GM12878 (cell line): ENCODE measurements at regions of chr4 and their contacts with region 1.

Region 1: GRCh38 chr4:142282870-142283431 is 563.1 kb downstream of the INPP4B start:
- DNase-seq: no peak
- ATAC-seq: peak; percentile 47
- H3K4me3 ChIP-seq: no peak overlapping the region
- H3K27ac ChIP-seq: no peak overlapping the region
- H3K4me1 ChIP-seq: no peaks in the 10 kb centered on the region
- H3K27me3 ChIP-seq: no peaks in the 10 kb centered on the region
- CTCF ChIP-seq: peak; percentile 48 to 53 (median 49); a peak in 5 of 6 replicates
- EP300 ChIP-seq: no peak
- POLR2A ChIP-seq: no peak
- RAD21 ChIP-seq: peak; percentile 35

Region 2: DNA sequence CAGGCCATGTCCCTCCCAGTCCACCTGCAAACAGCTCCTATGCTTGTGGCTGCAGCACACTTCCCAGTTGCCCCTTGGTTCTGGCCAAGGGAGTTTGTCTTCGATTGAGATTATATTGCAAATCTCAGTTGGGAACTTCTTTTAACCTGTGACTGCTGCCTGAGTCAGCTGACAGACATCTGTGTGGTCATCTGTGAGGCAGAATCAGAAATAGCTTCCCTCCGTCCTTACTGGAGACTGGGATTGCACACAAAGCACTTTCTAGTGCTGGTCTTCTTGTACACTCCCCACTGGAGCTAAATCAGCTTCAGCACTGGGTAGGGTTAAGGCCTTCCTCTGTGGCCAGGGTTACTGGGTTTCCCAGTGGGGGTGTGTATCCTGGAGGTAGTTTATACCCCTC is 1027.9 kb before region 1 on chr4:
- CTCF ChIA-PET with region 1: no interaction called
- POLR2A ChIA-PET with region 1: no interaction called
- RAD21 ChIA-PET with region 1: no interaction called
- SMC1A ChIA-PET with region 1: no interaction called
- in situ Hi-C with region 1: no loop called
- intact Hi-C with region 1: no loop called
- DNase-seq: no peak
- ATAC-seq: no peak
- H3K4me3 ChIP-seq: no peak overlapping the region
- H3K27ac ChIP-seq: no peak overlapping the region
- H3K4me1 ChIP-seq: no peaks in the 10 kb centered on the region
- H3K27me3 ChIP-seq: no peaks in the 10 kb centered on the region; a peak in 1 of 4 replicates
- CTCF ChIP-seq: no peak
- EP300 ChIP-seq: no peak
- POLR2A ChIP-seq: no peak
- RAD21 ChIP-seq: no peak

Region 3: DNA sequence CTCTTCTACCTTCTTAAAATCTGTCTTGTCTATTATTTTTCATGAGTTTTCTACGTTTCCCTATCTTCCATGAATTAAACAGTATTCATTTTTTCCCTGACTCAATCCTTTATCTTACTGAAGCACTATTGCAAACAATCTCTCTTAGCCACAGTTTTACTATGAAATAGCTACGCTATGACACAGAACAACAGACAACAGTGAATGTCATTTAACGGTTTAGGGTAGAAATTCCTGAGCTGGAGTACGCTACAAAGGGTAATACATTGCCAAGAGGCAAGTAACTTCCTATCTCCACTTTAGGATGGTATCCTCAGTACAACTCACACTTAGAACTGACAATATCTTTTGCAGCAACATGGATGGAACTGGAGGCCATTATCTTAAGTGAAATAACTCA is 10.6 kb after region 1 on chr4:
- CTCF ChIA-PET with region 1: interaction called, 18 read pairs
- POLR2A ChIA-PET with region 1: no interaction called
- RAD21 ChIA-PET with region 1: interaction called, 5 read pairs
- SMC1A ChIA-PET with region 1: interaction called, 41 read pairs
- in situ Hi-C with region 1: no loop called
- intact Hi-C with region 1: no loop called
- DNase-seq: no peak
- ATAC-seq: no peak
- H3K4me3 ChIP-seq: no peak overlapping the region
- H3K27ac ChIP-seq: no peak overlapping the region
- H3K4me1 ChIP-seq: no peaks in the 10 kb centered on the region
- H3K27me3 ChIP-seq: no peaks in the 10 kb centered on the region
- CTCF ChIP-seq: no peak
- EP300 ChIP-seq: no peak
- POLR2A ChIP-seq: no peak
- RAD21 ChIP-seq: no peak

Region 4: GRCh38 chr4:142347241-142347640 is 64.3 kb after region 1 on chr4:
- CTCF ChIA-PET with region 1: interaction called, 60 read pairs
- POLR2A ChIA-PET with region 1: interaction called, 3 read pairs
- RAD21 ChIA-PET with region 1: interaction called, 18 read pairs
- SMC1A ChIA-PET with region 1: interaction called, 26 read pairs
- in situ Hi-C with region 1: no loop called
- intact Hi-C with region 1: no loop called
- DNase-seq: no peak
- ATAC-seq: no peak
- H3K4me3 ChIP-seq: no peak overlapping the region
- H3K27ac ChIP-seq: no peak overlapping the region
- H3K4me1 ChIP-seq: no peaks in the 10 kb centered on the region
- H3K27me3 ChIP-seq: no peaks in the 10 kb centered on the region
- CTCF ChIP-seq: no peak
- EP300 ChIP-seq: no peak
- POLR2A ChIP-seq: no peak
- RAD21 ChIP-seq: no peak

Region 5: DNA sequence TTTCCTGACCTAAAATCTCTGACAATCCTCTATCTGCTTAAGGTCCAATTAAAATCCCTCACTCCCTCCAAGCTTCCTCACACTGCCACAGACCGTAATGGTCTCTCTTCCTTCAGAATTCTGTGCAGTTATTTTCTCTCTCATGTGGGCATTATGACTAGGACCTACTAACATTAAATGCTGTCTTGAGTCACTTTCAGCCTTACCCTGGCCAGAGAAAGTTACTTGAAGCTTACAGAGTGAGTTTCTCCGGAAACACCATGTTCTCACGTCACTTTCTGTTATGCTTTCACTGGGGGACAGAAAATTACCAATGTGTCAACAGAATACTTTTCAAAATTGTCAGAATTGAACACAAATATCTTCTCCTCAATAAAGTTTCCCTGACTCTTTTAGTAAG is 291.4 kb after region 1 on chr4:
- CTCF ChIA-PET with region 1: interaction called, 10 read pairs
- POLR2A ChIA-PET with region 1: no interaction called
- RAD21 ChIA-PET with region 1: interaction called, 31 read pairs
- SMC1A ChIA-PET with region 1: interaction called, 5 read pairs
- in situ Hi-C with region 1: no loop called
- intact Hi-C with region 1: no loop called
- DNase-seq: no peak
- ATAC-seq: peak; percentile 80
- H3K4me3 ChIP-seq: no peak overlapping the region
- H3K27ac ChIP-seq: no peak overlapping the region
- H3K4me1 ChIP-seq: no peaks in the 10 kb centered on the region
- H3K27me3 ChIP-seq: no peaks in the 10 kb centered on the region
- CTCF ChIP-seq: no peak
- EP300 ChIP-seq: no peak
- POLR2A ChIP-seq: no peak
- RAD21 ChIP-seq: no peak

Region 6: GRCh38 chr4:142719854-142720541 is 437.0 kb after region 1 on chr4:
- CTCF ChIA-PET with region 1: interaction called, 34 read pairs
- POLR2A ChIA-PET with region 1: no interaction called
- RAD21 ChIA-PET with region 1: interaction called, 5 read pairs
- SMC1A ChIA-PET with region 1: interaction called, 21 read pairs
- in situ Hi-C with region 1: no loop called
- intact Hi-C with region 1: loop called (anchors 5 kb)
- DNase-seq: no peak
- ATAC-seq: peak; percentile 67
- H3K4me3 ChIP-seq: no peak overlapping the region
- H3K27ac ChIP-seq: no peak overlapping the region
- H3K4me1 ChIP-seq: no peaks in the 10 kb centered on the region
- H3K27me3 ChIP-seq: no peaks in the 10 kb centered on the region
- CTCF ChIP-seq: peak; percentile 19 to 49 (median 32); a peak in 3 of 6 replicates
- EP300 ChIP-seq: no peak
- POLR2A ChIP-seq: no peak
- RAD21 ChIP-seq: peak; percentile 54

Region 7: GRCh38 chr4:142840516-142841123 is 557.7 kb after region 1 on chr4:
- CTCF ChIA-PET with region 1: interaction called, 3 read pairs
- POLR2A ChIA-PET with region 1: no interaction called
- RAD21 ChIA-PET with region 1: no interaction called
- SMC1A ChIA-PET with region 1: interaction called, 8 read pairs
- in situ Hi-C with region 1: no loop called
- intact Hi-C with region 1: loop called (anchors 5 kb)
- DNase-seq: no peak
- ATAC-seq: peak; percentile 53; the same call in 1 of the 3 replicates
- H3K4me3 ChIP-seq: no peak overlapping the region
- H3K27ac ChIP-seq: no peak overlapping the region
- H3K4me1 ChIP-seq: no peaks in the 10 kb centered on the region
- H3K27me3 ChIP-seq: peaks cover 2 to 4% of the 10 kb centered on the region in 2 experiments; a peak in 1 of 4 replicates
- CTCF ChIP-seq: peak; percentile 40 to 47 (median 43); a peak in 4 of 6 replicates
- EP300 ChIP-seq: no peak
- POLR2A ChIP-seq: no peak
- RAD21 ChIP-seq: peak; percentile 52